MCF 10A (cell line): ENCODE measurements at regions of chr6 and their contacts with region 1.

Region 1: DNA sequence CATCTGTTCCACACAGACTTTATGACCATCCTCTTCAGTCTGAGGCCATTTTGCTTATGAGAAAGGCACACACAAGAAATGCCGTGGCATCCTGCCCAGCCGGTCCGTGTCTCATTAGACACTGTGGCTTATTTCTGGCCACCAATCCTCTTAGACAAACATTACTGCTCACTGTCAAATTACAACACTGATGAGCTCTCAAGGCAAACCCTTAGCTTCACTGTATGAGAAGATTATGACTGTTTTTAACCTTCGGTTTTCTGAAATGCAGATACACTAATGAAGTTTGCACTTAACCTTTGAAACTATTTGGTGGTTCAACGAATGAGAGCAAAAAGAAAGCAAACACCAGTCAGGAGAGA is 50.5 kb upstream of the DST start:
- DNase-seq: peak; percentile 91
- H3K4me3 Mint-ChIP-seq: peak overlapping the region; percentile 77
- H3K27ac Mint-ChIP-seq: peak overlapping the region; percentile 97
- H3K4me1 Mint-ChIP-seq: peaks cover 51% of the 10 kb centered on the region
- H3K27me3 Mint-ChIP-seq: no peaks in the 10 kb centered on the region
- CTCF ChIP-seq: no peak

Region 2: GRCh38 chr6:56618050-56618449 is 75.2 kb before region 1 on chr6:
- CTCF ChIA-PET with region 1: interaction called, 4 read pairs
- POLR2A ChIA-PET with region 1: interaction called, 18 read pairs
- intact Hi-C with region 1: no loop called
- DNase-seq: no peak
- H3K4me3 Mint-ChIP-seq: no peak overlapping the region
- H3K27ac Mint-ChIP-seq: no peak overlapping the region
- H3K4me1 Mint-ChIP-seq: no peaks in the 10 kb centered on the region
- H3K27me3 Mint-ChIP-seq: no peaks in the 10 kb centered on the region
- CTCF ChIP-seq: peak; percentile 14

Region 3: DNA sequence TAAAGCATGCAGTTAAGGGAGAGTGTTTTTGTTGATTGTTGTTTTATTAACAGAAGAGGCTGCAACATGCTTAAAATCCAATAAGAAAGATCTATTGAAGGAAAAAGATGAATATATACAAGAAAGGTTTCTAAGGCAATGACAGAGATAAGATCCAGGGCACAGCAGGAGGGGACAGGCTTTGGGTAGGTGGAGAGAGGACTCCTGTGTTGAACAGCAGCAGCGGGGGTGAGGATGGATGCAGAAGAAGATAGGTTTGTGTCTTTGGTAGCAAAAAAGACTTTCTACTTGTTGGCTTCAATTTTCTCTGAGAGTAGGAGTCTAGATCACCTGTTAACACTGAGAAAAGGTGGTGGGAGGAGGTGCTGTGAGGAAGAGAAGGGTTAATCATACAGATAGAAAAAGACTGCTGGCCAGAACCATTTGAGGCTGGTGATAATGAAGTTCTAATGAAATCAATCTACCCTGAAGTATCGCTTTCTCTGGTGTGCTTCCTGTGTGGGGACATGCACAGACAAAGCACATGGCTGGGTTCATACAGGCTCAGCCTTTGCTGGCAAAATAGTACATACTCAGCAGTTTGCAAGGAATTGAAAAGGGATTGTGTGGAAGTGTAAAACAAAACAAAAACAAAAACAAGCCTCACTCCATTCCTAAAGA is 33.4 kb before region 1 on chr6:
- CTCF ChIA-PET with region 1: interaction called, 5 read pairs
- POLR2A ChIA-PET with region 1: interaction called, 395 read pairs
- intact Hi-C with region 1: no loop called
- DNase-seq: peak; percentile 42
- H3K4me3 Mint-ChIP-seq: peak overlapping the region; percentile 2
- H3K27ac Mint-ChIP-seq: peak overlapping the region; percentile 95
- H3K4me1 Mint-ChIP-seq: peaks cover 61% of the 10 kb centered on the region
- H3K27me3 Mint-ChIP-seq: no peaks in the 10 kb centered on the region
- CTCF ChIP-seq: no peak

Region 4: GRCh38 chr6:56749632-56750151 is 56.5 kb after region 1 on chr6:
- CTCF ChIA-PET with region 1: interaction called, 22 read pairs
- POLR2A ChIA-PET with region 1: interaction called, 13 read pairs
- intact Hi-C with region 1: no loop called
- DNase-seq: peak; percentile 88
- H3K4me3 Mint-ChIP-seq: peak overlapping the region; percentile 65
- H3K27ac Mint-ChIP-seq: peak overlapping the region; percentile 91
- H3K4me1 Mint-ChIP-seq: peaks cover 51% of the 10 kb centered on the region
- H3K27me3 Mint-ChIP-seq: no peaks in the 10 kb centered on the region
- CTCF ChIP-seq: no peak

Region 5: DNA sequence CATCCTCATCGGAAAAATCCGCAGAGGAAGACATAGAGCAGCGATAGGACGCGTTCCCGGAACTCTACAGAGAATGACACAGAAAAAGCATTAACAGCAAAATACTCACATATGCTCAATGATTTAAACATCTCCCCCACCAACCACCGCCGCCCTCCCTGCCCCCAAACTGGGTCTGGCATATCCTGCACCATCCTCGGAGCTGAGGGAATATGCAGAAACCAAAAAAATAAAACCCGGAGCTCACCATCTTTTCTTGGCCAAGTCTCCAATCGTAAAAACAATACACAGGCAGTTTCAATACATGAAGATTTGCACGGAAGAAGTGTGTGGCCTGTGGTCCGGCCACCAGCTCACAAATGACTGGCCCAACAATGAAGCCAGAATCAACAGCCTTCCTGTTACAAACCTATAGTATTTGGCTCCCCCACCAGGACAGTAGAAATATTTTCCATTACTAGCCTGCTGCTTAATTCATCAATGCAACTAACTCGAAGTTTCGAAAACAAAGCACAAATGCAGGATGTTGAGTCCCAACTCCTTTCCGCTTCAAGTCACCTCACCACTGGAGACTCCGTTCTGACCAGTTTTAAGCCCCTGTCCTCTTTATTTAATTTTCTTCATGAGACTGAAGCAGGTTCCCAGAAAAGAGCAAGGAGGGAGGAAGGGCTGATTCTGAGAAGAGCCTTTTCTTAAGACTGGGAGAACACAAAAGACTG is 158.5 kb after region 1 on chr6:
- CTCF ChIA-PET with region 1: interaction called, 17 read pairs
- POLR2A ChIA-PET with region 1: interaction called, 12 read pairs
- intact Hi-C with region 1: no loop called
- DNase-seq: peak; percentile 86
- H3K4me3 Mint-ChIP-seq: peak overlapping the region; percentile 81
- H3K27ac Mint-ChIP-seq: peak overlapping the region; percentile 56
- H3K4me1 Mint-ChIP-seq: peaks cover 35% of the 10 kb centered on the region
- H3K27me3 Mint-ChIP-seq: no peaks in the 10 kb centered on the region
- CTCF ChIP-seq: peak; percentile 57